Activated B cell treated with CpG ODN at 0.5 μM for 24 hours (primary cell): ENCODE measurements at regions of chr16 and their contacts with region 1.

Region 1: DNA sequence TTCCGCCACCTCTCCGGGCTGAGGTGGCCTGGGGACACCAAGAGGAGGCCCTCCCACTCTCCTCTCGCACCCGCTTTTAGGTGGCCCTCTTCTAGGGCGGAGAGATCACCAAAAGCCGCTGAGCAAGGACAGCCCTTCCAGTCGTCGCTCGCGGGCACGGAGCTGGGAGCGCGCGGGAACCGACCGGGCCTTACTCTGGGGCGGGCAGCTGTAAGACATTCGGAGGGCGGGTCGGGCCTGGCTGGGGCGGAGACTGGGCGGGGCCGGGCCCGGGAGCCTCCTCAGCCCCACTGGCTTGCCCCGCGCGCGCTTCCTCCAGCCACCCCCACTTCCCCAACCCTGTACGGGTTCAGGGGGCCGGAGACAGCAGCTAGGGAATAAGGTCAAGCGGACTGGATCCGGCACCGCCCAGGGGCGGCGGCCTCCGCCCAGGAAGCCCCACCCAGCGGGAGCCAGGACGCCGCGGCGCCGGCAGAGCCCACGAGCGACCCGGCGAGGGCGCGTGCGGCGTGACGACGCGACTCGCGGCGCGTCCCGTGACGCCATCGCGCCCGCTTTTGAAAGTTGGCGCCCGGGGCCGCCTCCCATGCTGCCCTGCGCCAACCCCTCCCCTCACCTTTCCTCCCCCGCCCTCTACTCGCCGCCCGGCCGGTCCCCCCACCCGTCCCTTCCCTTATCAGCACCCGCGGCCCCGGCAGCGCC is 351 bp upstream of the CTCF start:
- DNase-seq: peak; percentile 97
- ATAC-seq: peak; percentile 77
- H3K4me3 Mint-ChIP-seq: peak overlapping the region; percentile 91
- H3K27ac Mint-ChIP-seq: peak overlapping the region; percentile 91
- H3K4me1 Mint-ChIP-seq: peaks cover 61% of the 10 kb centered on the region
- H3K27me3 Mint-ChIP-seq: no peaks in the 10 kb centered on the region
- CTCF ChIP-seq: no peak

Region 2: GRCh38 chr16:67246934-67247697 is 314.9 kb before region 1 on chr16 and contains the start of gene FHOD1:
- CTCF ChIA-PET with region 1: no interaction called
- POLR2A ChIA-PET with region 1: interaction called, 3 read pairs
- intact Hi-C with region 1: loop called (anchors 1 kb)
- DNase-seq: peak; percentile 100
- ATAC-seq: peak; percentile 70
- H3K4me3 Mint-ChIP-seq: peak within 1 kb of the TSS; percentile 85
- H3K27ac Mint-ChIP-seq: peak within 1 kb of the TSS; percentile 80
- H3K4me1 Mint-ChIP-seq: peaks cover 50% of the 10 kb centered on the region
- H3K27me3 Mint-ChIP-seq: peaks cover 2% of the 10 kb centered on the region
- CTCF ChIP-seq: no peak
- total RNA-seq, gene FHOD1: 45.5 and 50.4 TPM in 2 replicates

Region 3: DNA sequence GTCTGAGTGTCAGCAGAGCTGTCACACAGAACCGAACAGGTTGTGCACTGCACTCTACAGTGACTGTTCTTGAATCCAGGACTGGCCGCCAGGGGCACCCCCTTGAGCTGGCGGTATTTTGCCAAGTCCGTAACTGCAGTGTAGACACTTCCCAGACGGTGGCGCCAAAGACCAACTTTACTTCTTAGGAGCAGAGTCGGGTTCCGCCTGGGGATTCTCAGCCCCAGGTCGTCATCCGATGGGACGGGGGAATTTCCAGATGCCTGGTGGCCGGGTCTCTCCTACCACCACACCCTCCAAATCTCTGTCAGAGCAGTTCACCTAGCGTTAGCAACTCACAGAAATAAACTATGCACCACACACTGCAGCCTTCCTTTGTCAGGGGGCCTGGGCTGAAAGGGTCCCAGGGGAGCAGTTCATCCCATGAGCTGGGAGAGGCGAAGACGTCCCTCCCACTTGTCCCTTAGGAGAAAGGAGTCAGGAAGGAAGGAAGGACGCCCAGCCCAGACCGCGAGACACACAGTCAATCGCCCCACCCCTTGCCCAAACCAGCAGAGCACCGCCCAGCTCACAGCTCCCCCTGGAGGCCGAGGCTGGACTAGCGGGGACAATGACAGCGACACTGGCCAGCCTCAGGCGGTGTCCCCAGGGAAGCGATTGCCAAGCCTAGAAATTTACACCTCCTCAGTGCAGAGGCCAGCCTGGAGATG is 40.7 kb before region 1 on chr16:
- CTCF ChIA-PET with region 1: interaction called, 29 read pairs
- POLR2A ChIA-PET with region 1: interaction called, 82 read pairs
- intact Hi-C with region 1: loop called (anchors 1 kb)
- DNase-seq: peak; percentile 95
- ATAC-seq: peak; percentile 70
- H3K4me3 Mint-ChIP-seq: peak overlapping the region; percentile 89
- H3K27ac Mint-ChIP-seq: peak overlapping the region; percentile 98
- H3K4me1 Mint-ChIP-seq: peaks cover 75% of the 10 kb centered on the region
- H3K27me3 Mint-ChIP-seq: no peaks in the 10 kb centered on the region
- CTCF ChIP-seq: peak; percentile 85

Region 4: GRCh38 chr16:67608364-67608763 is 46.4 kb after region 1 on chr16:
- CTCF ChIA-PET with region 1: no interaction called
- POLR2A ChIA-PET with region 1: interaction called, 3 read pairs
- intact Hi-C with region 1: loop called (anchors 2 kb)
- DNase-seq: no peak
- ATAC-seq: peak; percentile 25
- H3K4me3 Mint-ChIP-seq: no peak overlapping the region
- H3K27ac Mint-ChIP-seq: peak overlapping the region; percentile 47
- H3K4me1 Mint-ChIP-seq: peaks cover 23% of the 10 kb centered on the region
- H3K27me3 Mint-ChIP-seq: no peaks in the 10 kb centered on the region
- CTCF ChIP-seq: no peak

Region 5: DNA sequence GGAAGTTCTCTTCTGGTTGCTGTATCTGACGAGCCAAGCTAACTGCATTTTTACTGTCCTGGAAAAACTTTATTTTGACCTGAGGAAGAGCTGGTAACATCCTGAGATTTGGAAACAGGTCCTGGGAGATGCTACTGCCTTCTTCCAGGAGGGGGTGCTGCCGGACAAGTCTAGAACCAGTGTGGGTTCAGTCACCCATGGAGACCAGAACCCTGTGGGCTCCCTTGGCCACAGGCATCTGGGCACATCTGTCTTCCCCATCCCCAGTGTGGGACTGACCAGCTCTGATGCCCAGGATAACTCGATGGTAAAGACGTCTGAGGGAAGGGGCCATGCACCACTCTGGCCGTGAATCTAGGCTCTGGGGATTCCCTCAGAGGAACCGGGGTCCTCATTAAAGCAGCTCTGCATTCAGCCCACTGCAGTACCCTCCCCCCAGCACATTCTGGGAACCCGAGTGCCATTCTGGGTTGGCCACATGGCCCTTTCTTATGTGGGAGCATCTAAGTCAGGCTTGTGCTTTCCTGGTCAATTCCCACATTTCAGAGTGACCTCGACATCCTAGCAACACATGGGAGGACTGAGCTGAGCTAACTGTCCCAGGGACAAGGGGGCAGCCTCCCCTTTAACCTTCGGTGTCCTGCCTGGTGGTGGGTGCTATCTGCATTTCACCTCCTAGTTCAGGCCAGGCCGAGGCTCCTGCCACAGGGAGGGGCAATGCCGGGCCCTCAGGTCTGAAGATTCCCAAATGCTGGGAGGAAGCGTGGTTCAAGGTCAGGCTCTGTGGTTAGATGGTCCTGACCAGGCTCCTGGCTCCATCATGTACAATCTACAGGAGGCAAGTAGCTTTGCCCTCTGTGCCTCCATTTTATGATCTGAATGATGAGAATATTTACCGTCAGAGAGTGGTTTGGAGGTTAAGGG is 111.0 kb after region 1 on chr16:
- CTCF ChIA-PET with region 1: interaction called, 3 read pairs
- POLR2A ChIA-PET with region 1: interaction called, 11 read pairs
- intact Hi-C with region 1: loop called (anchors 1 kb)
- DNase-seq: no peak
- ATAC-seq: peak; percentile 42
- H3K4me3 Mint-ChIP-seq: no peak overlapping the region
- H3K27ac Mint-ChIP-seq: peak overlapping the region; percentile 3
- H3K4me1 Mint-ChIP-seq: peaks cover 42% of the 10 kb centered on the region
- H3K27me3 Mint-ChIP-seq: no peaks in the 10 kb centered on the region
- CTCF ChIP-seq: no peak

Region 6: DNA sequence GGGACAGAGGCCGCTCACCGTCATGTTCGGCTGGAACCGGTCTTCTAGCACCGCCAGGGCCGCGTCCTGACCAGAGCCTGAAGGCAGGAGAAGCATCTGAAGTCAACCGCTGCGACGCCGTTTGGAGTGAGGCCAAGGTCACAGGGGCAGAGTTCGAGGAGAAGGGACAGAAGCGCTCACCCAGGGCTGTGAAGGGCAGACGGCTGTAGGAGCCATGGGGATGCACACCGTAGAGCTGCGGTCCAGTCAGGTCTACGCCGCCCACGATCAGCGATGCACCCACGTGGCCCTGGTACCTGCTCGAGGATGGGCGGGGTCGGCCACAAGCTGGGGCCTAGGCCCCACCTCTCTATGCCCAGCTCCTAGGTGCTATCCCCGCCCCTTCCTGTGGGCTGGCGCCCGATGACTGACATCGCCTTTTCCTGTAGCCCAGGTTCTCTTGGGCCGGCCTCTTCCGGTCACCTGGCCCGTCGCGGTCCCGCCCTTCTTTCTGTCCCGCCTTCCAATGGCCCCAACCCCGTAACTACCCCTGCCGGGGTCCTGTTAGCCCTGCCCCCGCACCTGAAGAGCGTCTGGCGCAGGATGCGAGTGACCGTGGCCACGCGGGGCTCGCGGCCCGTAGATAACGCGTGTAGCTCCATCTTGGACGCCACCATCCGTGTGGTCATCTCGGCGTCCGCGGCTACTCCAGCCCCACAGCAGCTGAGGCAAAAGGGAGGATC is 373.6 kb after region 1 on chr16:
- CTCF ChIA-PET with region 1: no interaction called
- POLR2A ChIA-PET with region 1: no interaction called
- intact Hi-C with region 1: loop called (anchors 1 kb)
- DNase-seq: peak; percentile 85
- ATAC-seq: peak; percentile 89
- H3K4me3 Mint-ChIP-seq: peak overlapping the region; percentile 99
- H3K27ac Mint-ChIP-seq: peak overlapping the region; percentile 98
- H3K4me1 Mint-ChIP-seq: peaks cover 31% of the 10 kb centered on the region
- H3K27me3 Mint-ChIP-seq: no peaks in the 10 kb centered on the region
- CTCF ChIP-seq: no peak